ENCODE measurements at regions of chr10 and their contacts with region 1.

Region 1: DNA sequence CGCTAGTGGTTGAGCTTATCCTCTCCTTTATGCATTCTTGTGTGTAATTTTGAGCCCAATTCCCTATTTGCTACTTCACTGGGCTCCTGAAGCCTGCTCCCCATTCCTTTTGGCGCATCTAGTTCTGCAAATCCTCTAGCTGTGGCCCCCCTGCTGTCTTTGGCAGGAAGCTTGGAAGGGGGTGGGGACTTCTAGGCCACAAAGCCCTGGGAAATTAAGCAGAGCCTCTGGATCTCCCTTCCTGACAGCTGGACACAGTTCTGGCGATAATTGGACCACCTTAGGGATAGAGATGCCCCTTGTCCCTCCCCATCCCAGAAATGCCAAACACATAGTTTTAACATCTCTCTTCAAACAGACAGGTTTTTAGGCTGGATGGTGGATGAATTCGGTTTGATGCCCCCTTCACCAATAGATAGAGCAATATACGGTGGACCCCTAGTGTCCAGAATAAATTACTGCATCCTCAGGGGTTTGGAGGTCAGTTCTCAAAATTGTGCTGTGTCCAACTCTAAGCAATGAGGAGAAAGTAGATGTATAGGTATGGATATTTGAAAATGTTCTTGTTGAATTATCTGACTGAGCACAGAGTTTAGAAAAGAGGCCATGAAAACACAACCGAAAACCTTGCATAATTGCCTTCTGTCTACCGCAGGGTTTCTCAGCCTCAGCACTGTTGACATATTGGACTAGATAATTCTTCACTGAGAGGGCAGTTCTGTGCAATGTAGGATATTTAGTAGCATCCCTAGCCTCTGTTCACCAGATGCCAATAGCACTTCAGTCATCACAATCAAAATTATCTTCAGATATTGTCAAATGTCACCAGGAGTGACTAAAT is 75.5 kb downstream of the PAPSS2 start:
- DNase-seq: peak; percentile 44
- H3K4me3 ChIP-seq: peak overlapping the region; percentile 9
- CTCF ChIP-seq: peak; percentile 83

Region 2: DNA sequence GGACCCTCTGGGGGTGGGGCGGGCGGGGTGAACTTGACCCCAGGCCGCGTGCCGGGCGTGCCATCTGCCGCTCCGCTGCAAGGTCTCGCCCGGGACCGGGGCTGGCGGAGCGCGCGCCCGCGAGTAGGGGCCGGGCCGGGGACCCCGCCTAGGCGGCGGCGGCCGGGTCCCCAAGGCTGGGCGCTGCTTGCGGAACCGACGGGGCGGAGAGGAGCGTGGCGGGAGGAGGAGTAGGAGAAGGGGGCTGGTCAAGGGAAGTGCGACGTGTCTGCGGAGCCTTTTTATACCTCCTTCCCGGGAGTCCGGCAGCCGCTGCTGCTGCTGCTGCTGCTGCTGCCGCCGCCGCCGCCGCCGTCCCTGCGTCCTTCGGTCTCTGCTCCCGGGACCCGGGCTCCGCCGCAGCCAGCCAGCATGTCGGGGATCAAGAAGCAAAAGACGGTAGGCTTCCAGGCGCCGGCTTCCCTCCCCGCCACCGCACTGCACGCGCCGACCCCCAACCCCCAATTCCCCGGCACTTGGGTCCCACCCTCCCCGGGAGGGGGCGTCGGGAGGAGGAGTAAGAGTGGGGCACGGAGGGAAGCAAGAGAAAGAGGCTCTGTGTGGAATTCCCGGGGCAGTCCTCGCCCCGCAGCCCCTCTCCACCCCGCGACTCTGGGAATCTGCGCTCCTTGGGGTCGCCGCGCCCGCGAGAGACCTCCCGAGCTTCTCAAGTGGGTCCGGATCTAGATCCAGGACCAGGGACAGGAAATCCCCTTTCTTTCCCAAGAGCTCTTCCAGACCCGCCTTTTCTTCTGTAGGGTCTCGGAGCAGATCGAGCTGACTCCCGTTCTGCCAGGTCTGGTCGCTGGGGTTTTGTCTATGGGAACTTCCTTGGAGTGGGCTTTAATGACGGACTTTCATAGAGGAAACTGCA is 75.4 kb before region 1 on chr10 and contains the start of gene PAPSS2:
- in situ Hi-C with region 1: loop called (anchors 5 kb)
- DNase-seq: no peak
- H3K4me3 ChIP-seq: peak within 1 kb of the TSS; percentile 89
- CTCF ChIP-seq: no peak